Heart right ventricle (tissue), 16 donors: ENCODE measurements at regions of chr7 and their contacts with region 1.

Region 1: GRCh38 chr7:95476904-95477594 is 8.7 kb upstream of the ASB4 start:
- DNase-seq: peak in 1 of 2 donors; percentile 45
- ATAC-seq: peak in 6 of 8 donors; percentile 56 to 74 (median 72)
- H3K4me3 ChIP-seq: no peak overlapping the region
- H3K27ac ChIP-seq: no peak overlapping the region
- H3K4me1 ChIP-seq: peaks cover 0 to 10% (median 0%) of the 10 kb centered on the region in 9 donors
- H3K27me3 ChIP-seq: no peaks in the 10 kb centered on the region
- CTCF ChIP-seq: peak; percentile 51 to 88 (median 80)

Region 2: DNA sequence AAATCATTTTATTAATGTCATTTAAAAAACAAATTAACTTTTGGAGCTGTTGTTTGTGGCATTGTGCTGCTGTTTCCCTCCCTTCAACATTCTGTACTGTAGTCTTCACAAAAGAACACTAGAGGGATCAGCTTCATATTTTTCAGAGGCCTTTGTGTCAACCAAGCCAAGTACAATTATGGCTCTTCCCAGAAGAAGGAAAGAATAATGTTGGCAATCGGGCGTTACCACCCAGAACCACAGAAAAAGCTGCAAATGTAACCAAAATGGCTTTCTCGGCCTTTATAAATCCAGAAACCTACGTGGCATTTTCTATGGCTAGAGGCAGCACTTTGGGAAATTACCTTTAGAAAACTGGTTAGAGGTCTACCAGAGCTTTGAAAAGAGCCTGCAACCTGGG is 1181.2 kb before region 1 on chr7:
- intact Hi-C with region 1: loop called in 1 of 10 experiments (anchors 5 kb)
- DNase-seq: peak in 1 of 2 donors; percentile 13
- ATAC-seq: peak; percentile 66 to 87 (median 70)
- H3K4me3 ChIP-seq: peak overlapping the region in 5 of 10 donors; percentile 7 to 28 (median 21)
- H3K27ac ChIP-seq: peak overlapping the region in 7 of 10 donors; percentile 65 to 86 (median 74)
- H3K4me1 ChIP-seq: peaks cover 0 to 30% (median 9%) of the 10 kb centered on the region in 9 donors
- H3K27me3 ChIP-seq: peaks cover 0 to 10% (median 0%) of the 10 kb centered on the region in 7 donors
- CTCF ChIP-seq: peak in 8 of 9 donors; percentile 30 to 76 (median 55)

Region 3: GRCh38 chr7:94657771-94658693 is 819.0 kb before region 1 on chr7:
- intact Hi-C with region 1: loop called in 1 of 10 experiments (anchors 10 kb)
- DNase-seq: peak; percentile 86 to 91
- ATAC-seq: peak; percentile 81 to 98 (median 92)
- H3K4me3 ChIP-seq: peak overlapping the region in 9 of 10 donors; percentile 60 to 89 (median 69)
- H3K27ac ChIP-seq: peak overlapping the region in 4 of 10 donors; percentile 4 to 56 (median 49)
- H3K4me1 ChIP-seq: peaks cover 0 to 30% (median 16%) of the 10 kb centered on the region in 9 donors
- H3K27me3 ChIP-seq: peaks cover 0 to 42% (median 18%) of the 10 kb centered on the region in 7 donors
- CTCF ChIP-seq: no peak

Region 4: DNA sequence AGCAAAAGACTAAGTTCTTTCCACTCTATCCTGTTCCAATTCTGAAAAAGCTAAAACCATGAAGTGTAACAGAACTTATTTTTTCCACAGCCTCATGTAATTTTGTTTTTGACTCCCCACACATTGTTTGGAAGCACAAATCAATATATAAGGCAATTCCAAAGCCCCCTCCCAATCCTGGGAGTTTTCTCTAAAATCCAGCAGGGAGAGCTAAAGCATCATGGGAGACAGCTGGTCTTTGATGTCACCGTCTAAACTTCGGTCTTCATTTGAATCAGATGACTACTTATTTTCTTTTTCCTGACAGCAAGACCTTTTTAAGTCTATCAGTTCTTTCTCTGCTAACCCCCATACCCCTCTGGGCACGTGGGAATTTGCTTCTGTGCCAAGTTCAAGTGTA is 119.4 kb before region 1 on chr7:
- intact Hi-C with region 1: loop called in 2 of 10 experiments (anchors 5 to 10 kb)
- DNase-seq: no peak
- ATAC-seq: no peak
- H3K4me3 ChIP-seq: no peak overlapping the region
- H3K27ac ChIP-seq: no peak overlapping the region
- H3K4me1 ChIP-seq: no peaks in the 10 kb centered on the region
- H3K27me3 ChIP-seq: no peaks in the 10 kb centered on the region
- CTCF ChIP-seq: peak in 2 of 9 donors; percentile 10 to 20

Region 5: GRCh38 chr7:95517458-95517857 is 40.4 kb after region 1 on chr7:
- intact Hi-C with region 1: no loop called
- DNase-seq: no peak
- ATAC-seq: no peak
- H3K4me3 ChIP-seq: no peak overlapping the region
- H3K27ac ChIP-seq: no peak overlapping the region
- H3K4me1 ChIP-seq: no peaks in the 10 kb centered on the region
- H3K27me3 ChIP-seq: peaks cover 0 to 3% (median 0%) of the 10 kb centered on the region in 7 donors
- CTCF ChIP-seq: no peak

Region 6: DNA sequence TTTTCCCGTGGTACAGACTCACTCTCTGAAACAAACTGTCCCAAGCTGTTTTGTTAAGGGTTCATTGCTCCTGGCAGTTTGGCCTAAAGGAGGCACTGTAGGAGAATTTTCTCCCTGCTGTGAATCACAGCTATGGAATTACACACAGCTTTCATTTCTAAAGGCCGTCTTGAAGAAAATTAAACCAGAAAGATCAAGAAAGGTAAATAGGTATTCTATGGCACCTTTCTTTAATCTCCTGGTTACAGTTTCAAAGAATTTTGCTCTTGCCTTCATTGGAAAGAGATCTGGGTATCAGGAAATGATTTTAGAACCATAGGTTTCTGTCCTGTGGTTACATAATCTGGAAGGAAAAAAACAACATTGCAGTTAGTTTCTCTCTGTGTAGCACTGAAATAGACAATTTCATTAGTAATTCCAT is 68.0 kb after region 1 on chr7:
- intact Hi-C with region 1: loop called in 1 of 10 experiments (anchors 10 kb)
- DNase-seq: peak in 1 of 2 donors; percentile 69
- ATAC-seq: peak; percentile 76 to 92 (median 84)
- H3K4me3 ChIP-seq: peak overlapping the region in 8 of 10 donors; percentile 18 to 55 (median 45)
- H3K27ac ChIP-seq: peak overlapping the region; percentile 42 to 89 (median 70)
- H3K4me1 ChIP-seq: peaks cover 9 to 54% (median 42%) of the 10 kb centered on the region in 9 donors
- H3K27me3 ChIP-seq: no peaks in the 10 kb centered on the region
- CTCF ChIP-seq: peak; percentile 50 to 89 (median 78)

Region 7: DNA sequence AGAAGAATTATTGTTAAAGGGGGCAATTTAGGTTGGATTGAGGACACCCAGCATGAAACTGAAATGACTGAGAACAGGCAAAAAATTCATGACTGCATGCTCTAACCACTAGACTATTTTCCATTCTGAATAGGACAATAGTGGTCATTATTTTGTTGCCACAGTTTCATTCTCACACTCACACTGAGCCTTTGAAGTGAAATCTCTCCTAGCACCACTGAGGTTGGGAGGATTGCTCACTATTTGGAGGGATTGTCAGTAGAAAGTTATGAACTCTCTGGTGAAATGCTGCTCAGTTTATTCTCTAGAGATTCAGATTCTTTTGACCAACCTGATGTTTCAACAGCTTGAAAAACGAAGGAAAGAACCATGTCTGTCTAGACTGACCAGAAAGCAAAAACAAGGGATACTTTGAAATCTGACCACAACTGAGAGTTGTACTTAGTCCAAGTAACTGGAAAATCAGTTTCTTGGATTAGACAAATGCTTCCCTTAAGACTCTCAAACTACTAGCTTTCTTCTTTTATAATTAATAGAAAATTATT is 486.5 kb after region 1 on chr7:
- intact Hi-C with region 1: no loop called
- DNase-seq: no peak
- ATAC-seq: no peak
- H3K4me3 ChIP-seq: no peak overlapping the region
- H3K27ac ChIP-seq: no peak overlapping the region
- H3K4me1 ChIP-seq: no peaks in the 10 kb centered on the region
- H3K27me3 ChIP-seq: no peaks in the 10 kb centered on the region
- CTCF ChIP-seq: no peak

Region 8: GRCh38 chr7:96026611-96027010 is 549.6 kb after region 1 on chr7:
- intact Hi-C with region 1: no loop called
- DNase-seq: no peak
- ATAC-seq: no peak
- H3K4me3 ChIP-seq: no peak overlapping the region
- H3K27ac ChIP-seq: no peak overlapping the region
- H3K4me1 ChIP-seq: no peaks in the 10 kb centered on the region
- H3K27me3 ChIP-seq: no peaks in the 10 kb centered on the region
- CTCF ChIP-seq: no peak